ENCODE measurements at regions of chr18 and their contacts with region 1.

Region 1: GRCh38 chr18:48445540-48445939 is 36.4 kb upstream of the ZBTB7C start:
- DNase-seq: peak; percentile 76
- ATAC-seq: peak; percentile 49

Region 2: GRCh38 chr18:47772374-47773248 is 672.9 kb before region 1 on chr18:
- intact Hi-C with region 1: loop called (anchors 5 kb)
- DNase-seq: no peak
- ATAC-seq: peak; percentile 50

Region 3: DNA sequence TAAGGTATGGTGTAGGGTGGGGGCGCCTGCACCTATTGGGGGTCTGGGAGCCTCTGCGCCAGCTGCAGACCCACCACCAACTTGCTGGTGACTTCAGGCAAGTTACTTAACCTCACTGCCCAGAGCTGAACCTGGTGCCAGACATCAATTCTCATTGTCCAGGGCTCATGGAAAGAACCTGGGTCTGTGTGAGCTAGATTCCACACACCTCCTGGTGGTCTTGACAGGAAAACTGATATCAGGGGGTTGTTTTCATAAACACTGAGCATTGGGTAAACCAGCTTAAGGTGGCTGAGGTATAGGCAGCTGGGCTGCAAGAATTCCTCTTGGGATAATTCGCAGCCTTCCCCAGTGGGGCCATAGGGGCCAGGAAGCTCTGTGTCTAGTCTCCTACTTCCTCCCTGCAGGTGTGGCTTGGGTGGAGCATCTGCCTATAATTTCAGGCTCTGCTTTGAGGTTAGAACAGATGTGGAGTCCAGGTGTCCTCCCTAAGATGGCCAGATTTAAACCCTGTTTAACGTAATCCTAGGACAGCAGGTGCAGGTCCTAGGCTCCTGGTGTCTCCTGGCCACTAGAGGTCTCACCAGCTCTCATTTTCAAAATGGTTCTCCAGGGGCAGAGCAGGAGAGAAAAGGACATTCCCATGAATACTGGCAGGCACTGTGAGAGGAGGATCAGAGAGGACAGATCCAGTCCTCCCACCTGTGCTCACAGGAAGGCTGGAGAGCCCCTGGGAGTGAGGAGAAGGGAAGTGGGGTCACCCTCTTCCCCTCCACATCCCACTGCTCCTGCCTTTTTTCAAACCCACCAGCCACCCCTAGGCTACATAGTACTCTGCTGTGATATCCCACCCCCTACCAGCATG is 414.7 kb before region 1 on chr18:
- intact Hi-C with region 1: loop called (anchors 1 kb)
- DNase-seq: peak; percentile 45
- ATAC-seq: peak; percentile 71

Region 4: DNA sequence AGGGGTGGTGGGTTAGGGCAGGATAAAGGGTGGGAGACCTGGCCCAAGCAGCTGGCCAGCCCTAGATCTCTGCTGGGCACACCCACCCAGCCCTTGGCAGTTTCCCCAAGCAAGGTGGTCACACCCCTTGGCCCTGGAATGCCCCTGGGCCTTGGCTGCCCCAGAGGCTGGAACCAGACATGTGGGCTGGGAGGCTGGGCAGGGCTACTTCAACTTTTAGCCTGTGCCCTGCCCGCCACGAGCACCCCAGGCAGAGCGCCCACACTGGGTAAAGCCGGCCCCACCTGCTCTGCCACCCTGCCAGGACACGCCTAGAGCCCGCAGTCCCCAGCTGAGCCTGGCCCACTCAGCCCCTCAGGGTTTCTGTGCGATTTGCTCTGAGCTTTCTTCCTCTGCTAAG is 395.4 kb before region 1 on chr18:
- intact Hi-C with region 1: no loop called
- DNase-seq: no peak
- ATAC-seq: no peak

Region 5: DNA sequence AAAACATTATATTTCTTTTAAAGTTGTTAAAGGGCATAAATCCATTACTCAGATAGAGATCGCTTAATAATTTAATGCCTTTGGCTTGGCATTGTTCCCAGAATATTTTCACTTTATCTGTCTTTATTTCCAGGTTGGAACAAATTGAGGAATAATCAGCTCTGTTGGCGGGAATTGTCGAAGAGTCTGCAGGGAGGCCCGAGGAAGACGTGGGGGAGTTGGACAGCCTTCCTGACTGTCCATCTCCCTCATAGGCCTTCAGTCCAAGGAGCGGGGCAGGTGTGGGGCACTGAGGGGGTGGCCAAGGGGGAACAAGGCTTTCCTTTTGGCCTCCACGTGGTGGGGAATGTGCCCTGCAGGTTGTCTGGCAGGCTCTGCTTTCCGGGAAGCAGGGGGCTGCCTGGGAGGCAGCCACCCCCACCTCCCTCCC is 216.0 kb before region 1 on chr18:
- intact Hi-C with region 1: loop called (anchors 1 kb)
- DNase-seq: no peak
- ATAC-seq: no peak

Measured in Right ventricle myocardium inferior (tissue), 1 donor.